Activated CD4-positive, alpha-beta memory T cell treated with anti-CD3 and anti-CD28 coated beads for 36 hours (primary cell): ENCODE measurements at regions of chr13 and their contacts with region 1.

Region 1: DNA sequence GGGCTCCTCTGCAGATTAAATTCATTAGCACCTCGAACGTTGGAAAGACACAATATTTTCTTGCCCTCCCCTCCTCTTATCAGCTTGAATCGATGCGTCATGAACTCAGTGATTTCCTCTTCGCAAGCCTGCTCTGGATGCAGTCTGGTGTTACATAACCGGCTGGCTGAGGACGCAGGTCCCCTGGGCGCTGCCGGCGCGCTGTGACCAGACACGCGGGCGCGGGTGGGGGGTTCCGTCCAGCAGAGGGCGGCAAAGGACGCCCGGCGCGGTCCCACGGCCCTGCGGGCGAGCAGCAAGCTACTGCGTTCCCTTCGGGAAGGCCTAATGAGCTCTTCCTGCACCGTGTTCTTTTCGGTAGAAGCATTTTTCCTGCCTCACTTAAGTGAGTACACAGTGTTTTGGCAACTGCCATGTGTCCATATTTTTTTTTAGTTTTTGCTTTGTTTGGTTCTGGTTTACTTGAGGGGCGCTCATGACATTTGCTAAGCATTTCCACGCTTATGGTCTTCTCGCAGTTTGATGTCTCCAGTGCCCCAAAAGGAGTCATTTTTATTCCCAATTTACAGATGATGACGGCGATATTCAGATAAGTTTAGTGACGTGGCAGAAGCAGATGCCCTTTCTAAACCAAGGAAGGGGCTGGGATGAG is 112.2 kb upstream of the MBNL2 start:
- DNase-seq: peak; percentile 86
- H3K4me3 Mint-ChIP-seq: no peak overlapping the region
- H3K27ac Mint-ChIP-seq: no peak overlapping the region
- H3K4me1 Mint-ChIP-seq: peaks cover 13% of the 10 kb centered on the region
- H3K27me3 Mint-ChIP-seq: peaks cover 14% of the 10 kb centered on the region

Region 2: DNA sequence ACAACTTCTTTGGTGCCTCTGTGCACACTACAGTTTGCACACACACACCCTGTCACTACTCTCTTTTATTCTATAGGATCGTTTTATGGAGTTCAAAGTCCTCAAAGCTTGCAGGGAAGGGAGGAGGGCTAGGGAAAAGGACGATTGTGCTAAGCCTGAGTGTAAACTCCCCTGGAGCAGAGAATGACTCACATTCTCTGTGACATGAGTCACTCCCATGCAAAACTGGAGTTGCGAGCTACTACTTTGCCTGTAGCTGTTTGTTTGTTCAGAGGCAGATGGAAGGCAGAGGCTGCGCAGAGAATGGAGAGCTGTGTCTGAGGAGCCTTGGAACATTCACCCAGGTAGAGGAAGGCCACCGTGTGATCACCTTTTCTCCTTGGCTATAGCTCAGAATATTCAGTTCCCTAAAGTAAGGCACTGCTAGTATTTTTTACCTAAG is 31.6 kb after region 1 on chr13:
- CTCF ChIA-PET with region 1: interaction called, 21 read pairs
- POLR2A ChIA-PET with region 1: no interaction called
- intact Hi-C with region 1: no loop called
- DNase-seq: peak; percentile 54
- H3K4me3 Mint-ChIP-seq: no peak overlapping the region
- H3K27ac Mint-ChIP-seq: no peak overlapping the region
- H3K4me1 Mint-ChIP-seq: peaks cover 11% of the 10 kb centered on the region
- H3K27me3 Mint-ChIP-seq: peaks cover 23% of the 10 kb centered on the region

Region 3: DNA sequence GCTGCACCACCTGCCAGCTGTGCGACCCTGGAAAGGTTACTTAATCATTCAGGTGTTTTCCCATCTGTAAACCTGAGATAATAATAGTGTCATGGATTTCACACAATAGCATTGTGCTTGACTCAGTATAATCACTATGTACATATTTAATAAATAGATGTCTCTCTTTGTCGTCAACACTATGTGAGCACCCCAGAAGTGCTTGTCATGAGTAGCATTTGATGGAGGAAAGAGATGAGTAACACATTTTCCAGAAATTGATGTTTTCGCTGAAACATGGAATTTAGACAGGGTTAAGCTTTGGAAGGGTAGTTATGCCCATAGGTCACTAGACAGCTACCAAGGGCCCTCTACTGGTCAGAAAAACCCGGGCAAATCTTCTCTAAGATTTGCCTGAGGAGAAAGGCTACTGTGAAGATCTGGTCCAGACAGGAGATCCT is 102.7 kb after region 1 on chr13:
- CTCF ChIA-PET with region 1: interaction called, 54 read pairs
- POLR2A ChIA-PET with region 1: no interaction called
- intact Hi-C with region 1: no loop called
- DNase-seq: no peak
- H3K4me3 Mint-ChIP-seq: no peak overlapping the region
- H3K27ac Mint-ChIP-seq: no peak overlapping the region
- H3K4me1 Mint-ChIP-seq: peaks cover 29% of the 10 kb centered on the region
- H3K27me3 Mint-ChIP-seq: no peaks in the 10 kb centered on the region

Region 4: DNA sequence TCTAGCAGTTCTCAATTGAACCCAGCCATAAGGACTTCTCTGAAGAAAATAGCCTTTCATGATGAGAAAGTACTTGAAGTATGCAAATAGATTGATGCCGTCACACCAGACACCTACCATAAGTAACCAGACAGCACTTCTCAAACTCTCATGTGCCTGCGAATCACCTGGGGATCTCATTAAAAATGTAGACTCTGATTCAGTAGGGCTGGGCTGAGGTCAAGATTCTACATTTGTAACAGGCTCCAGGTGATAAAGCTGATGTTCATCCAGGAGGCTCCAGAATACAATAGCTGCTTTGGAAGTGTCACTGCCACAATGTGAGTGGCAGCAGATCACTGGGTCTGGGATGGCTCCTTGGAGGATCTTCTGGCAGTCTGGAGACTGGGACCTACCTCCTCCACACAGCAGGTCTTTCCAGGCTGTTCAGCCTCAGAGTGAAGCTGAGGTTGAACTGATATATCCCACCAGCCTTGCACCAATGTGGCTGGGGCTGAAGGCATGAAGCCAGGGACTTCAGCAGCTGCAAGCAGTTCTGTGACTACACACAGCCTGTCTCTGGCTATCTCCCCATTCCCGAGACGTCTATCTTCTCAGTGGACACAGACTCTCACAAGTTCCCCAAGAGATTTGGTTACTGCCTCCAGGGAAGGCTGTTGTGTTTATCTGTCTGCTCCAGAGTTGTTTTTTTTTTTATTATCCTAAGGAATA is 121.3 kb after region 1 on chr13:
- CTCF ChIA-PET with region 1: interaction called, 91 read pairs
- POLR2A ChIA-PET with region 1: no interaction called
- intact Hi-C with region 1: no loop called
- DNase-seq: no peak
- H3K4me3 Mint-ChIP-seq: no peak overlapping the region
- H3K27ac Mint-ChIP-seq: no peak overlapping the region
- H3K4me1 Mint-ChIP-seq: peaks cover 32% of the 10 kb centered on the region
- H3K27me3 Mint-ChIP-seq: no peaks in the 10 kb centered on the region

Region 5: DNA sequence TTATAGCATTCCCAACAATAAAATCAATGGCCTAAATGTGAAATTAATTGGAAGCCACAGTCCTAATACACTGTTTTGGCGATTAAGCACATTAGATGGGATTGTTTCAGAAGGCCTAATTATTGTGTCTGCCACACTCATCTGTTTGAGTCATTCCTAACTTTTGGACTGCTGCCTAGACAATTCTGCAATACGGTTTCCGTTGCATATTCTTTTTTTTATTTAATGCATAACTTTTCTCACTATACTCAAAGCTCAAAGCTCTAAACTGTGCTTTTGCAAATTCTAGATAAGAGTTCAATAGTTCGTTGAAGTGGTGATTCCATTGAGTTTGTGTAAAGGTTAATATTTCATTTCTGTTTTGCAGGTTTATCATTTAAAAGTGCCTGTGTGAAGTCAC is 165.3 kb after region 1 on chr13:
- CTCF ChIA-PET with region 1: no interaction called
- POLR2A ChIA-PET with region 1: no interaction called
- intact Hi-C with region 1: no loop called
- DNase-seq: no peak
- H3K4me3 Mint-ChIP-seq: no peak overlapping the region
- H3K27ac Mint-ChIP-seq: no peak overlapping the region
- H3K4me1 Mint-ChIP-seq: peaks cover 49% of the 10 kb centered on the region
- H3K27me3 Mint-ChIP-seq: no peaks in the 10 kb centered on the region

Region 6: GRCh38 chr13:97359181-97360057 is 249.5 kb after region 1 on chr13:
- CTCF ChIA-PET with region 1: interaction called, 207 read pairs
- POLR2A ChIA-PET with region 1: interaction called, 4 read pairs
- intact Hi-C with region 1: loop called (anchors 1 kb)
- DNase-seq: peak; percentile 52
- H3K4me3 Mint-ChIP-seq: no peak overlapping the region
- H3K27ac Mint-ChIP-seq: no peak overlapping the region
- H3K4me1 Mint-ChIP-seq: no peaks in the 10 kb centered on the region
- H3K27me3 Mint-ChIP-seq: no peaks in the 10 kb centered on the region

Region 7: DNA sequence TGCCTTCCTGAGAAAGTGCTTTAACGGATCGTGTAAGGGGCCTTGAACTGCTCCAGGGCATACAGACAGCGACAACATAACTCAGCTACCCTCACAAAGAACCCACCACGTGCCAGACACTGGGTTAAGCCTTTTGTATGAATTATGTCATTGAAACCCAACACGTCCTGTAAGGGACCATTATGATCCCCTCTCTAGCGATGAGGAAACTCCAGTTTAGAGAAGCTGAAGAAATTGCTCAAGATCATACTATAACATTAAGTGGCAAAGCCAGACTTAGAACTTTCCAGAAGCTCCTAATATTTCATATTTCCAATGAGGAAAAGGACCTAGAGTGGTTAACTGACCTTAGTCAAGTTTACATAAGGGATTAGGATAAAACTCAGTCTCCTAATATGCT is 267.0 kb after region 1 on chr13:
- CTCF ChIA-PET with region 1: interaction called, 13 read pairs
- POLR2A ChIA-PET with region 1: no interaction called
- intact Hi-C with region 1: no loop called
- DNase-seq: no peak
- H3K4me3 Mint-ChIP-seq: no peak overlapping the region
- H3K27ac Mint-ChIP-seq: no peak overlapping the region
- H3K4me1 Mint-ChIP-seq: no peaks in the 10 kb centered on the region
- H3K27me3 Mint-ChIP-seq: no peaks in the 10 kb centered on the region